H1 (cell line): ENCODE measurements at regions of chr20 and their contacts with region 1.

Region 1: DNA sequence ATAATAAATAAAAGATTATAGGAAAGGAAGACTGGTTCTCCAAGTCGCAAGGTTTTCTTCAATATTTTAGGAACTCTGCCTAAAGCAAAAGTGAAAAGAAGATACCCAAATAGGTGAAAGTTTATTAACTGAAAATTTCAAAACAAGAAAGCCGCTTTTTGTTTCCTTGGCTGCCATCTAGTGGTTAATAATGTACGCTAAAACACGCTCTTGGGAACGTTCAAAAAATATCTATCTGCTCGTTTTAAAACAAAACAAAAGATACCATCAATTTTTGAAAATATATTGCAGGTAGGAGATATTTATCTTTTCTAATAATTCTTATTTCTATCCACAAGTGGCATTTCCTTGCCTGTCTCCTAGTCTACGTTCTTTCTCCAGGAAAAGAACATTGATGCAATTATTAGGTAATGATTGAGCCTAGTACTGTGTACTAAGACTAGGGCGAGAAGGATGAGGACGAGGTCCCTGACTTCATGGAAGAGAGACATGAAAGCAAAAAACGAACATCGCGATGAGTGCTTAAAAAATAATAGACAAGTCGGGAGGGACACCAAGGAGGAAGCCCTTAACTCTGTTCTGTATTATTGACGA is 97.2 kb downstream of the SPTLC3 start:
- DNase-seq: no peak
- H3K4me3 ChIP-seq: no peak overlapping the region
- H3K27ac ChIP-seq: no peak overlapping the region
- H3K4me1 ChIP-seq: no peaks in the 10 kb centered on the region; a peak in 4 of 7 replicates
- H3K27me3 ChIP-seq: no peaks in the 10 kb centered on the region
- CTCF ChIP-seq: peak in 2 of 3 experiments; percentile 32 to 47; a peak in 2 of 4 replicates
- EP300 ChIP-seq: no peak
- POLR2A ChIP-seq: no peak
- RAD21 ChIP-seq: peak; percentile 71 to 76

Region 2: GRCh38 chr20:12916699-12917098 is 189.3 kb before region 1 on chr20:
- CTCF ChIA-PET with region 1: no interaction called
- POLR2A ChIA-PET with region 1: no interaction called
- DNase-seq: no peak
- H3K4me3 ChIP-seq: no peak overlapping the region
- H3K27ac ChIP-seq: no peak overlapping the region
- H3K4me1 ChIP-seq: no peaks in the 10 kb centered on the region
- H3K27me3 ChIP-seq: no peaks in the 10 kb centered on the region
- CTCF ChIP-seq: no peak
- EP300 ChIP-seq: no peak
- POLR2A ChIP-seq: no peak
- RAD21 ChIP-seq: no peak

Region 3: DNA sequence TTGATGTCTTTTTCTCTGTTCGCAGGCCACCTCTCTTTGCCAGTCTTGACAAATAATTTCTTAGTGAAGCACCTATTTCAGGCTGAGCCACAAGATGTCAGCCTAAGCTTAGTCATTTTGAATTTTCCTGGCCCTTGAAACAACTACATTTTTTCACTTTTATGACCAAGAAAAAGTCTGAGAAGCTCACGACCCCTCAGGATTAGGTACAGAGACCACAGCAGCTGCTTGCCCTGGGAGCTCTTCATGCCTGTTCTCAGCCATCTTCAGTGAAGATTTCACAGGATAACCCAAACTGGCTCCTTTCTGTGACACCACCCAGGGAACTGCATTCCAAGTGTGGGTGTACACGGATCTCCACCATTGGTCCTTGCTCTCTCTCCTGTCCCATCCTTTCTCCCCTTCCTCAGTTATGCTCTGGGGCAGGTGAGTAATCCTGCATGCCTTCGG is 135.6 kb before region 1 on chr20:
- CTCF ChIA-PET with region 1: interaction called, 53 read pairs
- POLR2A ChIA-PET with region 1: no interaction called
- DNase-seq: no peak
- H3K4me3 ChIP-seq: no peak overlapping the region
- H3K27ac ChIP-seq: no peak overlapping the region
- H3K4me1 ChIP-seq: peaks cover 0 to 5% (median 0%) of the 10 kb centered on the region in 4 experiments; a peak in 1 of 7 replicates
- H3K27me3 ChIP-seq: no peaks in the 10 kb centered on the region
- CTCF ChIP-seq: peak in 2 of 3 experiments; percentile 51 to 60; a peak in 3 of 4 replicates
- EP300 ChIP-seq: no peak
- POLR2A ChIP-seq: no peak
- RAD21 ChIP-seq: peak; percentile 85

Region 4: DNA sequence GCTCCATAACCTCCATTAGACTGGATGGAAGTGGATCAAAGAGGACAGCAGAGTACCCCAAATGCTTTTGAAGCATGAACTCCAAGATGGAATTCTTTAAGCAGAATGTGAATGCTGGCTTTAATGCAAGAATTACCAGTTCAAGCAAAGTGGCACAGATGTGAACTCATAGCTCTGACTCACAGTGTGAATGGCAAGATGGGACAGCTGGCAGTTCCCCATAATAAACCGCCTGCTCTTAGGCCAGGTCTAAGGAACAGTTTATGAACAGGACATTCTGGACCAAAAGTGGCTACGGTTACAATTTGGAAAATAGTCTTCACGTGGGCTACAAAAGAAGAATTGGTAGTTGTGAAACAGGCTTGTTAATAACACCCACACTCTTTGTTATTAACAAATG is 20.7 kb before region 1 on chr20:
- CTCF ChIA-PET with region 1: interaction called, 10 read pairs
- POLR2A ChIA-PET with region 1: no interaction called
- DNase-seq: no peak
- H3K4me3 ChIP-seq: no peak overlapping the region
- H3K27ac ChIP-seq: no peak overlapping the region
- H3K4me1 ChIP-seq: no peaks in the 10 kb centered on the region
- H3K27me3 ChIP-seq: no peaks in the 10 kb centered on the region
- CTCF ChIP-seq: no peak
- EP300 ChIP-seq: no peak
- POLR2A ChIP-seq: no peak
- RAD21 ChIP-seq: no peak

Region 5: GRCh38 chr20:13119583-13119982 is 13.6 kb after region 1 on chr20:
- CTCF ChIA-PET with region 1: interaction called, 14 read pairs
- POLR2A ChIA-PET with region 1: no interaction called
- DNase-seq: peak in 1 of 2 experiments; percentile 15
- H3K4me3 ChIP-seq: no peak overlapping the region
- H3K27ac ChIP-seq: no peak overlapping the region
- H3K4me1 ChIP-seq: no peaks in the 10 kb centered on the region; a peak in 1 of 7 replicates
- H3K27me3 ChIP-seq: no peaks in the 10 kb centered on the region
- CTCF ChIP-seq: peak in 2 of 3 experiments; percentile 86 to 89; a peak in 3 of 4 replicates
- EP300 ChIP-seq: no peak
- POLR2A ChIP-seq: no peak
- RAD21 ChIP-seq: peak; percentile 92 to 94